ENCODE measurements at regions of chr19 and their contacts with region 1.

Region 1: GRCh38 chr19:16111160-16111908 is at the start of gene RAB8A:
- DNase-seq: peak; percentile 98 to 100 (median 99)
- ATAC-seq: peak; percentile 87
- H3K4me3 ChIP-seq: peak within 1 kb of the TSS; percentile 98 to 100
- H3K4me3 Mint-ChIP-seq: peak within 1 kb of the TSS; percentile 97
- H3K27ac ChIP-seq: peak within 1 kb of the TSS; percentile 93 to 98
- H3K27ac Mint-ChIP-seq: peak within 1 kb of the TSS; percentile 98
- H3K4me1 ChIP-seq: peaks cover 41% of the 10 kb centered on the region
- H3K4me1 Mint-ChIP-seq: peaks cover 39% of the 10 kb centered on the region
- H3K27me3 ChIP-seq: no peaks in the 10 kb centered on the region
- H3K27me3 Mint-ChIP-seq: no peaks in the 10 kb centered on the region
- CTCF ChIP-seq: peak; percentile 84
- total RNA-seq, gene RAB8A: 79.1 to 88.4 TPM

Region 2: GRCh38 chr19:15629003-15629880 is 482.1 kb before region 1 on chr19:
- CTCF ChIA-PET with region 1: interaction called, 4 read pairs
- POLR2A ChIA-PET with region 1: no interaction called
- intact Hi-C with region 1: loop called in 1 of 2 experiments (anchors 2 kb)
- DNase-seq: peak; percentile 81 to 98 (median 85)
- ATAC-seq: peak; percentile 93
- H3K4me3 ChIP-seq: no peak overlapping the region
- H3K4me3 Mint-ChIP-seq: no peak overlapping the region
- H3K27ac ChIP-seq: no peak overlapping the region
- H3K27ac Mint-ChIP-seq: no peak overlapping the region
- H3K4me1 ChIP-seq: peaks cover 5% of the 10 kb centered on the region
- H3K4me1 Mint-ChIP-seq: peaks cover 2% of the 10 kb centered on the region
- H3K27me3 ChIP-seq: no peaks in the 10 kb centered on the region
- H3K27me3 Mint-ChIP-seq: peaks cover 17% of the 10 kb centered on the region
- CTCF ChIP-seq: peak; percentile 91

Region 3: GRCh38 chr19:15748239-15748638 is 363.1 kb before region 1 on chr19:
- CTCF ChIA-PET with region 1: no interaction called
- POLR2A ChIA-PET with region 1: no interaction called
- intact Hi-C with region 1: no loop called
- DNase-seq: no peak
- ATAC-seq: no peak
- H3K4me3 ChIP-seq: no peak overlapping the region
- H3K4me3 Mint-ChIP-seq: no peak overlapping the region
- H3K27ac ChIP-seq: no peak overlapping the region
- H3K27ac Mint-ChIP-seq: no peak overlapping the region
- H3K4me1 ChIP-seq: no peaks in the 10 kb centered on the region
- H3K4me1 Mint-ChIP-seq: no peaks in the 10 kb centered on the region
- H3K27me3 ChIP-seq: peaks cover 3 to 9% of the 10 kb centered on the region in 2 experiments
- H3K27me3 Mint-ChIP-seq: peaks cover 56% of the 10 kb centered on the region
- CTCF ChIP-seq: no peak

Region 4: GRCh38 chr19:15866631-15867030 is 244.7 kb before region 1 on chr19:
- CTCF ChIA-PET with region 1: no interaction called
- POLR2A ChIA-PET with region 1: no interaction called
- intact Hi-C with region 1: no loop called
- DNase-seq: no peak
- ATAC-seq: no peak
- H3K4me3 ChIP-seq: no peak overlapping the region
- H3K4me3 Mint-ChIP-seq: no peak overlapping the region
- H3K27ac ChIP-seq: no peak overlapping the region
- H3K27ac Mint-ChIP-seq: no peak overlapping the region
- H3K4me1 ChIP-seq: peaks cover 8% of the 10 kb centered on the region
- H3K4me1 Mint-ChIP-seq: peaks cover 19% of the 10 kb centered on the region
- H3K27me3 ChIP-seq: peaks cover 0 to 2% of the 10 kb centered on the region in 2 experiments
- H3K27me3 Mint-ChIP-seq: no peaks in the 10 kb centered on the region
- CTCF ChIP-seq: no peak

Region 5: DNA sequence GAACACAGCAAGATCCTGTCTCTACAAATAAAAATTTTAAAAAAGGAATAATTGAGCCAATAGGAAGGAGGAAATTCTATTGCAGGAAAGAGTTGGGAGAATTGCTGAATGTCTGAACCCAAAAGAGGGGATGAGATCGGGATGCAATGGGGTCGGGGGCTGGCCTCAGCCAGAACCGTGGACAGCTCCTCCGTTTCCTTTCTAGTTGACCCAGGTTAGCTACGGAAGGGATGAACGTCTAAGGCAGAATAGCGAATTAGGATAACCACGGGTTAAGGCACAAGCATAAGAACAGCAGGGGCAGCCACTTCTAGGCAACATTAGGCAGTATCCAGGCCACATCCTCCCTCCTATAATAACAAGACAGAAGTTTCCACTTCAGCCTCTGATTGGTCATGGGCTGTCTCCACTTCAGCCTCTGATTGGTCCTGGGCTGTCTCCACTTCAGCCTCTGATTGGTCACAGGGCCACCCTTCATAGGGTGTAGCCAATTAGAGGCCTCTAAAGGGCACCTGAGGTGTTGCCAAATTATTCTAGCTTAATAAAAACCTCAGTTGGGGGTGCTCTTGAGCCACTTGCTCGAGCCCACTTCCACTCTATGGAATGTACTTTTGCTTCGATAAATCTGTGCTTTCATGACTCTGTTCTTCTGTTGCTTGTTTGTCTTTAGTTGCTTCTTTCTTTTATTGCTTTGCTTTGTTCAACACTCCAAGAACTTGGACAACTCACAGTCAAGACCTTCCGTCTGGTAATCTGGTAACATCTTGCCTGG is 59.9 kb before region 1 on chr19:
- CTCF ChIA-PET with region 1: interaction called, 5 read pairs
- POLR2A ChIA-PET with region 1: no interaction called
- intact Hi-C with region 1: loop called in 1 of 2 experiments (anchors 1 kb)
- DNase-seq: peak in 6 of 9 experiments; percentile 17 to 83 (median 56)
- ATAC-seq: peak; percentile 99
- H3K4me3 ChIP-seq: no peak overlapping the region
- H3K4me3 Mint-ChIP-seq: no peak overlapping the region
- H3K27ac ChIP-seq: no peak overlapping the region
- H3K27ac Mint-ChIP-seq: no peak overlapping the region
- H3K4me1 ChIP-seq: no peaks in the 10 kb centered on the region
- H3K4me1 Mint-ChIP-seq: peaks cover 8% of the 10 kb centered on the region
- H3K27me3 ChIP-seq: no peaks in the 10 kb centered on the region
- H3K27me3 Mint-ChIP-seq: no peaks in the 10 kb centered on the region
- CTCF ChIP-seq: no peak

Region 6: DNA sequence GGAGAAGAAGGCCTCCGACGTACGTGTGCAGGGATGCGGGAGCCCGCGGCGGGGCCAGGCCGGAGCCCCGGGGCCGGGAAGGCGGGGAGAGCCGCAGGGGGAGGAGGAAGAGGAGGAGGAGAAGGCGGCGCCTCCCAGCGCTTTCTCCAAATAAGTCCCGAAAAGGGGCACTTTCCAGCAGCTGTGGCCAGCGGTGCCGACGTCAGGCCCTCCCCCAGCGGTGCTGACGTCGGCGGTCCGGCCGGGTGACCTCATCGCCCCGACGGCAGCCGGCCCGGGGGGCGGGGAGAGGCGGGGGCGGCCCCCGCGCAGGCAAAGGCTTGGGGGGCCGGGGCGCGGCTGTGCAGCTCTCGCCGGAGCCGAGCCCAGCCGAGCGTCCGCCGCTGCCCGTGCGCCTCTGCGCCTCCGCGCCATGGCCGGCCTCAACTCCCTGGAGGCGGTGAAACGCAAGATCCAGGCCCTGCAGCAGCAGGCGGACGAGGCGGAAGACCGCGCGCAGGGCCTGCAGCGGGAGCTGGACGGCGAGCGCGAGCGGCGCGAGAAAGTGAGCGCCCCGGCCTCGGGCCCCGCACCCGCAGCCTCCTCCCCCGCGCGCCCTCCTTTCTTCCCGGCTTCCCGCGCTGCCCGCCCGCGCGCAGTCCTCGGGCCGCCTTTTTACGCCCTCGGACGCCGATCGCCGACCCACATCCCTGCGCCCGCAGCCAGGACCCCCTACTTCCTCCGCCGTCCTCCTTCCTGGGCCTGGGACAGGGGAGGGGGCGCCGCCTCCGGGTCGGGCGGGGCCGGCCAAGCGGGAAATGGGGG is 35.0 kb before region 1 on chr19 and contains the start of gene TPM4:
- CTCF ChIA-PET with region 1: interaction called, 10 read pairs
- POLR2A ChIA-PET with region 1: interaction called, 15 read pairs
- intact Hi-C with region 1: loop called (anchors 1 kb)
- DNase-seq: peak; percentile 57 to 94 (median 81)
- ATAC-seq: peak; percentile 48
- H3K4me3 ChIP-seq: peak within 1 kb of the TSS; percentile 59 to 79
- H3K4me3 Mint-ChIP-seq: peak within 1 kb of the TSS; percentile 79
- H3K27ac ChIP-seq: peak within 1 kb of the TSS; percentile 64 to 92
- H3K27ac Mint-ChIP-seq: peak within 1 kb of the TSS; percentile 96
- H3K4me1 ChIP-seq: peaks cover 81% of the 10 kb centered on the region
- H3K4me1 Mint-ChIP-seq: peaks cover 74% of the 10 kb centered on the region
- H3K27me3 ChIP-seq: no peaks in the 10 kb centered on the region
- H3K27me3 Mint-ChIP-seq: no peaks in the 10 kb centered on the region
- CTCF ChIP-seq: no peak
- total RNA-seq, gene TPM4: 187 to 199 TPM

Region 7: DNA sequence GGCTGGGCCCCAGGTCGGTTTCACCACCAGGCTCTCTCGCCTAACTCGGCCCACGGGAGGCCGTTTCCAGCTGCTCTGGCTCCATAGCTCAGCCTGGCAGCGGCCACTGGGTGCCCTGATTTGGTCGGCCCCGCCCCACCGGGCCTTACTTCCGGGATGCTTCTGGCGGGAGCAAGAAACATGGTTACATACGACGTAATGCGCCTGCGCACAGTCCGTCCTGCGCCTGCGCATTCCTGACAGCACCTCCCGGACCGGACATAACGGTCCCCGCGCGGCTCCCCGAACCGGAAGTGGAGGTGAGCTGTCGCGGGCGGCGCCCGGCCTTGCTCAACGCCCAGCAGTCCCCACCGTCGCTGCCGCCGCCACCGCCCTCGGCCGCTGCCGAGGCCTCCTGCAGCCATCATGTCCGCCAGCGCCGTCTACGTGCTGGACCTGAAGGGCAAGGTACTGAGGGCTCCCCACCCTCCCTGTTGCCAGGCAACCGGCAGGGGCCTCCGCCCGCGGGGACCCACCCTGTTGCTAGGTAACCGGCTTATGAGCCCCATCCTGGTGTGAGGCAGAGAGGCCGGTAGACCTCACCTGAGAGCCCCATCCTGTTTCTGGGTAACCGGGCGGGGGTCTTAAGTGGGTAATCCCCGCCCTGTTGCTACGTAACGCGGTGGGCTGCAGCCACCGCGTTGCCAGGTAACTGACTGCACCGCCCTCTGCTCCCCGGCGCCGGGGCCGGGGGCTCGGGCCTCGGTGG is 86.5 kb after region 1 on chr19 and contains the start of gene AP1M1:
- CTCF ChIA-PET with region 1: no interaction called
- POLR2A ChIA-PET with region 1: no interaction called
- intact Hi-C with region 1: loop called in 1 of 2 experiments (anchors 1 kb)
- DNase-seq: peak; percentile 95 to 99 (median 98)
- ATAC-seq: peak; percentile 82
- H3K4me3 ChIP-seq: peak within 1 kb of the TSS; percentile 98 to 99
- H3K4me3 Mint-ChIP-seq: peak within 1 kb of the TSS; percentile 93
- H3K27ac ChIP-seq: peak within 1 kb of the TSS; percentile 87 to 98
- H3K27ac Mint-ChIP-seq: peak within 1 kb of the TSS; percentile 97
- H3K4me1 ChIP-seq: peaks cover 54% of the 10 kb centered on the region
- H3K4me1 Mint-ChIP-seq: peaks cover 49% of the 10 kb centered on the region
- H3K27me3 ChIP-seq: no peaks in the 10 kb centered on the region
- H3K27me3 Mint-ChIP-seq: no peaks in the 10 kb centered on the region
- CTCF ChIP-seq: no peak
- total RNA-seq, gene AP1M1: 76.2 to 83.4 TPM

Region 8: GRCh38 chr19:16495982-16496612 is 384.8 kb after region 1 on chr19 and contains the starts of genes C19orf44 and CALR3:
- CTCF ChIA-PET with region 1: no interaction called
- POLR2A ChIA-PET with region 1: no interaction called
- intact Hi-C with region 1: loop called in 1 of 2 experiments (anchors 1 kb)
- DNase-seq: peak; percentile 92 to 98 (median 96)
- ATAC-seq: peak; percentile 99
- H3K4me3 ChIP-seq: peak within 1 kb of the TSS; percentile 66 to 89
- H3K4me3 Mint-ChIP-seq: peak within 1 kb of the TSS; percentile 94
- H3K27ac ChIP-seq: peak within 1 kb of the TSS; percentile 67 to 73
- H3K27ac Mint-ChIP-seq: peak within 1 kb of the TSS; percentile 86
- H3K4me1 ChIP-seq: peaks cover 11% of the 10 kb centered on the region
- H3K4me1 Mint-ChIP-seq: peaks cover 14% of the 10 kb centered on the region
- H3K27me3 ChIP-seq: no peaks in the 10 kb centered on the region
- H3K27me3 Mint-ChIP-seq: no peaks in the 10 kb centered on the region
- CTCF ChIP-seq: no peak
- total RNA-seq, gene C19orf44: 0.52 to 0.61 TPM
- total RNA-seq, gene CALR3: not detected

Measured in CD8-positive, alpha-beta T cell (primary cell).